IMR-90 (cell line): ENCODE measurements at regions of chr1 and their contacts with region 1.

Region 1: GRCh38 chr1:56821140-56821797 is 2.1 kb upstream of the FYB2 start:
- DNase-seq: peak; percentile 79
- ATAC-seq: peak; percentile 93
- H3K4me3 ChIP-seq: no peak overlapping the region
- H3K27ac ChIP-seq: no peak overlapping the region
- H3K4me1 ChIP-seq: peaks cover 13% of the 10 kb centered on the region
- H3K27me3 ChIP-seq: no peaks in the 10 kb centered on the region
- CTCF ChIP-seq: peak; percentile 95
- POLR2A ChIP-seq: no peak
- RAD21 ChIP-seq: peak; percentile 91

Region 2: DNA sequence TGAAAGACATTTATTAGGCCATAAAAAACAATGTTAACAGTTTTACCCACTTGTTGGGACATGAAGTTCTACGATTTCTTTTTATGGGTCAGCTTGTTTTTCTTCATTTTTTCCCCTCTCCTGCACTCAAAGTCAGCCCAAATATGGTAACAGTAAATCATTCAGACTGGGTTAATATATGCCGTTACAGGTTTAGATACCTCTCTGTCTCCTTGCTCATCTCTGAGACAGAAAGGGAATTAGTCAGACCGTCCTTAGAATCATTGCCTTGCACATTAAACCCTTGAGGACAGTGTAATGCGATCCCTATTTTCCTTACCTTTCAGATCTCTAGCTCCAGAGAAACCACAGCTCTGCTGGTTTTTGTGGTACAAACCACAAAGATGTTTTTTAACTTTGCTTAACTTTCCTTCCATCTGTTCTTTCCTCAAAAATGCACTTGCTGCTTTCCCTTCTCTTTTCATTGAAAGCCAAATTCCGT is 855.2 kb before region 1 on chr1:
- CTCF ChIA-PET with region 1: no interaction called
- POLR2A ChIA-PET with region 1: no interaction called
- dilution Hi-C with region 1: no loop called
- in situ Hi-C with region 1: no loop called
- intact Hi-C with region 1: no loop called
- DNase-seq: peak; percentile 65
- ATAC-seq: no peak
- H3K4me3 ChIP-seq: no peak overlapping the region
- H3K27ac ChIP-seq: no peak overlapping the region
- H3K4me1 ChIP-seq: no peaks in the 10 kb centered on the region
- H3K27me3 ChIP-seq: peaks cover 22% of the 10 kb centered on the region
- CTCF ChIP-seq: no peak
- POLR2A ChIP-seq: no peak
- RAD21 ChIP-seq: no peak

Region 3: GRCh38 chr1:56291374-56291919 is 529.8 kb before region 1 on chr1:
- CTCF ChIA-PET with region 1: no interaction called
- POLR2A ChIA-PET with region 1: no interaction called
- dilution Hi-C with region 1: no loop called
- in situ Hi-C with region 1: no loop called
- intact Hi-C with region 1: no loop called
- DNase-seq: no peak
- ATAC-seq: no peak
- H3K4me3 ChIP-seq: no peak overlapping the region
- H3K27ac ChIP-seq: no peak overlapping the region
- H3K4me1 ChIP-seq: no peaks in the 10 kb centered on the region; the same call in 1 of the 2 replicates
- H3K27me3 ChIP-seq: no peaks in the 10 kb centered on the region
- CTCF ChIP-seq: no peak
- POLR2A ChIP-seq: no peak
- RAD21 ChIP-seq: no peak

Region 4: GRCh38 chr1:56301847-56302246 is 519.4 kb before region 1 on chr1:
- CTCF ChIA-PET with region 1: no interaction called
- POLR2A ChIA-PET with region 1: no interaction called
- dilution Hi-C with region 1: no loop called
- in situ Hi-C with region 1: no loop called
- intact Hi-C with region 1: loop called (anchors 10 kb)
- DNase-seq: peak; percentile 95
- ATAC-seq: peak; percentile 89
- H3K4me3 ChIP-seq: no peak overlapping the region
- H3K27ac ChIP-seq: peak overlapping the region; percentile 24; the same call in 1 of the 2 replicates
- H3K4me1 ChIP-seq: peaks cover 10% of the 10 kb centered on the region
- H3K27me3 ChIP-seq: no peaks in the 10 kb centered on the region
- CTCF ChIP-seq: no peak
- POLR2A ChIP-seq: no peak
- RAD21 ChIP-seq: no peak

Region 5: DNA sequence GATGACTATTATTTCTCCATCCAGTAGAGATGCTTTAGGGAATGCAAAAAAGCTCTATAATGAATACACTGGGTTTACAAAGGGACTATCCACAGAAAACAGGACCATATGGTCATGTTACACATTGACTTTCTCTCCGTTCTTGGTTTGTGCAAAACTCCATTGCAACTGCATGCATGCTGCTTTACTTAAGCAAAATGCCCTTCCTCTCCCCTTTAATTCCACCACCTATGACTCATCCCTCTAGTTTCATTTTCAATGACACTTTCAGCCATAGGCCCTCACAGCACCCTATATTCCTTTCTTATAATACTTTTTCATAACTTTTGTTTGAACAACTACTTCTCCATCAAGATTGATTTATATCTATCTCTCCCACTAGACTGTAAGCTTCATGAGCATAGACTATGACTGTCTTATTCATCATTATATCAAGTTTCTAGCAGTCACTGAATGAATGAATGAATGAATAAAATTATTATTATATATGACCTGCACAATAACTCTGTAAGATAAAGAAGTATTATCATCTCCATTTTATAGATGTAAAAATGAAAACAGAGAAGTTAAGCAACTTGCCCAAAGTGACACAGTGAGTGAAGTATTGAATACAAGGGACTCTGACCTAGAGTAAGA is 490.8 kb before region 1 on chr1:
- CTCF ChIA-PET with region 1: no interaction called
- POLR2A ChIA-PET with region 1: no interaction called
- dilution Hi-C with region 1: no loop called
- in situ Hi-C with region 1: no loop called
- intact Hi-C with region 1: no loop called
- DNase-seq: peak; percentile 84
- ATAC-seq: peak; percentile 77
- H3K4me3 ChIP-seq: no peak overlapping the region
- H3K27ac ChIP-seq: no peak overlapping the region
- H3K4me1 ChIP-seq: peaks cover 25% of the 10 kb centered on the region
- H3K27me3 ChIP-seq: no peaks in the 10 kb centered on the region
- CTCF ChIP-seq: no peak
- POLR2A ChIP-seq: no peak
- RAD21 ChIP-seq: no peak

Region 6: GRCh38 chr1:56590520-56591011 is 230.7 kb before region 1 on chr1:
- CTCF ChIA-PET with region 1: interaction called, 3 read pairs
- POLR2A ChIA-PET with region 1: no interaction called
- dilution Hi-C with region 1: no loop called
- in situ Hi-C with region 1: loop called (anchors 10 kb)
- intact Hi-C with region 1: loop called (anchors 2 kb)
- DNase-seq: no peak
- ATAC-seq: no peak
- H3K4me3 ChIP-seq: no peak overlapping the region
- H3K27ac ChIP-seq: no peak overlapping the region
- H3K4me1 ChIP-seq: no peaks in the 10 kb centered on the region
- H3K27me3 ChIP-seq: no peaks in the 10 kb centered on the region
- CTCF ChIP-seq: no peak
- POLR2A ChIP-seq: no peak
- RAD21 ChIP-seq: no peak

Region 7: GRCh38 chr1:56709269-56709880 is 111.9 kb before region 1 on chr1:
- CTCF ChIA-PET with region 1: interaction called, 5 read pairs
- POLR2A ChIA-PET with region 1: no interaction called
- dilution Hi-C with region 1: no loop called
- in situ Hi-C with region 1: no loop called
- intact Hi-C with region 1: loop called (anchors 2 kb)
- DNase-seq: peak; percentile 65
- ATAC-seq: peak; percentile 67
- H3K4me3 ChIP-seq: no peak overlapping the region
- H3K27ac ChIP-seq: no peak overlapping the region
- H3K4me1 ChIP-seq: peaks cover 2% of the 10 kb centered on the region; the same call in 1 of the 2 replicates
- H3K27me3 ChIP-seq: no peaks in the 10 kb centered on the region
- CTCF ChIP-seq: peak; percentile 56
- POLR2A ChIP-seq: no peak
- RAD21 ChIP-seq: peak; percentile 59

Region 8: GRCh38 chr1:56774067-56774609 is 47.1 kb before region 1 on chr1:
- CTCF ChIA-PET with region 1: no interaction called
- POLR2A ChIA-PET with region 1: no interaction called
- dilution Hi-C with region 1: no loop called
- in situ Hi-C with region 1: no loop called
- intact Hi-C with region 1: no loop called
- DNase-seq: no peak
- ATAC-seq: no peak
- H3K4me3 ChIP-seq: no peak overlapping the region
- H3K27ac ChIP-seq: no peak overlapping the region
- H3K4me1 ChIP-seq: no peaks in the 10 kb centered on the region
- H3K27me3 ChIP-seq: 0 out of 2 replicates have a peak, but pooled peaks cover 1% of the 10 kb centered on the region
- CTCF ChIP-seq: no peak
- POLR2A ChIP-seq: no peak
- RAD21 ChIP-seq: no peak